ENCODE measurements at regions of chr1 and their contacts with region 1.

Region 1: DNA sequence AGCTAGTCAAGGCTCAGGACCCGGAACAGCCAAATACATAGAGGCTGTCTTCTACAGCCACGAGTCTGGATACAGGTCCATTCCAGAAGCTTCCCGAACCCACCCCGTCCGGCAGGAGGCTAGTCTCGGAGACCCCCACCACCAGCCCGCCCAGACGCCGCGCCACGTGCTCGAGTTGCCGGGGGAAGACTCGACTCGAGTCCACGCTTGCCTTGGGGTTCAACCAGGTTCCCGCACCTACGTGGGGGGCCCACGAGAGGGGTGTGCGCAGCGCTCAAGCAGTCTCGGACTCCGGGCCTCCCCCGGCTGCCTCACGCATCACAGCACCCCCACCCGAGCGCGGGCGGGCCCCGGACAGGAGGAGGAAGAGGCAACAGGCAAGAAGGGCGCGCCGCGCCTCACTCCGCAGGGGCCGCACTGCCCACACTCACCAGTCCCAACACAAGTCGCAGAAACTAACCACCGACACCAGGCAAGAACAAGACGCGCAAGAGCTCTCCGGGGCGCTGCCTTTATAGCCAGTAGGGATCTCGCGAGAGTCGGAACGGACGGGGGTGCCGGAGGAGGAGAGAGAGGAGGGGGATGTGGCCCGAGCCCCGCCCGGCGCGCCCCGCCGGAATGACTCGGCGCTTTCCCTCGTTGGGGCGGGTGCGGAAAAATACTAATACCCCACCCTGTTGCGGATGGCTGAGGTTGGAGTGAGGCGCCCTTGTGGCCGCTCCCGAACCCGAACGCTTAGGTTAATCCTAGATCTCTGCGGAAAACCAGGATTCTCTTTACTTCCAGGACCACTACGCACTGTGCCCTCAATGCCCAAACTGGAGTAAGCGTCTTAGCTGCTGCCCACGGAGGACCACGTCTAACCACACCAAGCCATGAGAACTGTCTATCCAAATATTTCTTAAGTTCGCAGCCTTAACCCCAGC is at the start of gene PRDX1:
- DNase-seq: peak; percentile 97
- H3K4me3 Mint-ChIP-seq: peak within 1 kb of the TSS; percentile 95
- H3K27ac Mint-ChIP-seq: peak within 1 kb of the TSS; percentile 88
- H3K4me1 Mint-ChIP-seq: peaks cover 49% of the 10 kb centered on the region
- H3K27me3 Mint-ChIP-seq: peaks cover 10% of the 10 kb centered on the region
- total RNA-seq, gene PRDX1: 296 to 309 TPM

Region 2: DNA sequence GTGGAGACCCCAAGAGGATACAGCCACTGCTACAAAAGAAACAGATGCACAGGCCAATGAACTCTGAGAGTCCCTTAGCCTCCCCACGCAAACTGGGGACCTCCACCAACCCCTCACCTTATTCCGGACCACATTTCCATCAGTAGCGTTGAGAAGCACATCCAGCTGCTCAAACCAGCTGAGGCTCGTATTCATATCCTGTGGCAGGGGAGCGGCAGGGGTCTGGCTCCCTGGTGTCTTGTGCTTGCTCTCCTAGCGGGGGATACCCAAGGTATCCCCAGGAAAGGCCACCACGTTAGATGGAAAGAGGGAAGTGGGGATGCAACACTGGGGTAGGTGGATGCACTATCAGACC is 22.3 kb before region 1 on chr1:
- CTCF ChIA-PET with region 1: interaction called, 7 read pairs
- POLR2A ChIA-PET with region 1: interaction called, 64 read pairs
- DNase-seq: peak; percentile 40
- H3K4me3 Mint-ChIP-seq: peak overlapping the region; percentile 88
- H3K27ac Mint-ChIP-seq: peak overlapping the region; percentile 77
- H3K4me1 Mint-ChIP-seq: peaks cover 36% of the 10 kb centered on the region
- H3K27me3 Mint-ChIP-seq: no peaks in the 10 kb centered on the region

Region 3: GRCh38 chr1:45543581-45544417 is 22.1 kb after region 1 on chr1:
- CTCF ChIA-PET with region 1: interaction called, 5 read pairs
- POLR2A ChIA-PET with region 1: interaction called, 89 read pairs
- DNase-seq: peak; percentile 75
- H3K4me3 Mint-ChIP-seq: peak overlapping the region; percentile 14
- H3K27ac Mint-ChIP-seq: peak overlapping the region; percentile 26
- H3K4me1 Mint-ChIP-seq: peaks cover 34% of the 10 kb centered on the region
- H3K27me3 Mint-ChIP-seq: peaks cover 9% of the 10 kb centered on the region

Region 4: DNA sequence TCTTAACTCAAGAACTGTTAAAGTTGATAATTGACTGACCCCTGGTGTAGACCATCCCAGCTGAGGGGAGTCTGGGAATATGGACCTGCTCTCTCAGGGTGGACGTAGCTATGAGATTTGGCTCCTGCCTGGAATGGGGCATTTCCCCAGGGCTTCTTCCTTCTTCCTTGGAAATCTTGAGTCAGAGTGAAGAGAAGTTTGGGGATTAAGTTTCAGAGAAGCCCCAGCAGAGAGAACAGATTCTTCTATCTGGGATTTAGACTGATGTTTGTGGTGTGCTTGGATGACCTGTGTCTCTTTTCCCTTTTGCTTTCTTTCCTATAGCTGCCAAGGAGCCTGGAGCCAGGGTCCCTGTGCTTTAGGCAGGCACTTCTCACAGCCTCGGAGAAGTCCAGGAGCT is 42.2 kb after region 1 on chr1:
- CTCF ChIA-PET with region 1: interaction called, 20 read pairs
- POLR2A ChIA-PET with region 1: interaction called, 34 read pairs
- DNase-seq: no peak
- H3K4me3 Mint-ChIP-seq: no peak overlapping the region
- H3K27ac Mint-ChIP-seq: no peak overlapping the region
- H3K4me1 Mint-ChIP-seq: peaks cover 5% of the 10 kb centered on the region
- H3K27me3 Mint-ChIP-seq: no peaks in the 10 kb centered on the region

Region 5: DNA sequence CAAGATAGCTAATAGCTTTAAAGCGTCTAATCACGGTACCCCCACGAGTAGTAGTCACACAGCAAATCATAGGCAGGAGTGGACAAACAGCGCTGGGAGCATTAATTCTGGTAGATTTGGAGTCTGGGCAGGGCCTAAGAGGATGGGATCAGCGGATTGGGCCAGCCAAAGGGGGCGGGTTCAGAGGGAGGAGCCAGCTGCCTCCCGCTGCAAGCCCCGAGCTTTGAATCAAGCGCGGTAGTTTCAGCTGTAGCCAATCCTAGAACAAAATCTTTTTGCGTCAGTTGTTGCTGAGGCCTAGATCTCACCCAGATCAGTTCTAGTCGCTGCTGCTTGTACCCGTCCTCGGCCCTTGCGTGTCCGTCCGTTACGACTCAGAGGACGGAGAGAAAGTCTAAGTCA is 61.6 kb after region 1 on chr1:
- CTCF ChIA-PET with region 1: interaction called, 9 read pairs
- POLR2A ChIA-PET with region 1: interaction called, 83 read pairs
- DNase-seq: peak; percentile 96
- H3K4me3 Mint-ChIP-seq: peak overlapping the region; percentile 88
- H3K27ac Mint-ChIP-seq: peak overlapping the region; percentile 98
- H3K4me1 Mint-ChIP-seq: peaks cover 29% of the 10 kb centered on the region
- H3K27me3 Mint-ChIP-seq: no peaks in the 10 kb centered on the region

Measured in activated CD4-positive, alpha-beta memory T cell treated with anti-CD3 and anti-CD28 coated beads, Interleukin-2, amount 10 ng/mL, durations not matched to agents 7 days and 5 days (primary cell).